Keratinocyte (primary cell): ENCODE measurements at regions of chr2 and their contacts with region 1.

Region 1: GRCh38 chr2:217713395-217714286 is 289.2 kb downstream of the TNS1 start:
- DNase-seq: no peak
- H3K4me3 ChIP-seq: no peak overlapping the region
- H3K27ac ChIP-seq: no peak overlapping the region
- H3K4me1 ChIP-seq: peaks cover 12% of the 10 kb centered on the region
- H3K27me3 ChIP-seq: no peaks in the 10 kb centered on the region
- CTCF ChIP-seq: peak; percentile 96 to 99 (median 99)

Region 2: DNA sequence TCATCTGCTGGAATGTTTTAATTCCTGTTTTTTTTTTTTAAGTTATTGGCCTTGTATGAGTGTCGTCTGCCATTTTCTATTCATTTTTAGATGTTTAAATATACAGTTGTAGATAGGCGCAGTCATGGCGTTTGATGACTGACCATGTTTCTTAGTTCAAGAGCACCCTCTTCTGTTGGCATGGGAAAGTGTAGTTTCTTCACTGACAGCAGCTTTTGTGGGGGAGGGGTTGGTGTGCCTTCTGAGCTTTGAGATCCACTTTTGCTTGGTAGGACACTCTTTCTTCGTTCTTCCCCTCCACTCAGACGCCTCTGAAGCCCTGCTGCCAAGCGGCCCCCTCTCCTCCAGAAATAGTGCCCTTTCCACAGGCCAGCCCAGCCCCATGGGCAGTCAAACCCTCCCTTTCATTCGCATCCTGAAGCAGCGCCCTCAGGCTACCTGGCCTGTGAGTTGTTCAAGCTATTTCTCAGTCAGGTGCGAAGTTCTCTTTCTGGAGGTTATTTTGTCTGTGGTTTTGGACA is 202.8 kb before region 1 on chr2:
- dilution Hi-C with region 1: loop called (anchors 25 kb)
- DNase-seq: peak; percentile 25
- H3K4me3 ChIP-seq: no peak overlapping the region
- H3K27ac ChIP-seq: no peak overlapping the region
- H3K4me1 ChIP-seq: peaks cover 4% of the 10 kb centered on the region
- H3K27me3 ChIP-seq: no peaks in the 10 kb centered on the region
- CTCF ChIP-seq: peak; percentile 73 to 83 (median 77)